HEK293T (cell line): ENCODE measurements at regions of chr6 and their contacts with region 1.

Region 1: DNA sequence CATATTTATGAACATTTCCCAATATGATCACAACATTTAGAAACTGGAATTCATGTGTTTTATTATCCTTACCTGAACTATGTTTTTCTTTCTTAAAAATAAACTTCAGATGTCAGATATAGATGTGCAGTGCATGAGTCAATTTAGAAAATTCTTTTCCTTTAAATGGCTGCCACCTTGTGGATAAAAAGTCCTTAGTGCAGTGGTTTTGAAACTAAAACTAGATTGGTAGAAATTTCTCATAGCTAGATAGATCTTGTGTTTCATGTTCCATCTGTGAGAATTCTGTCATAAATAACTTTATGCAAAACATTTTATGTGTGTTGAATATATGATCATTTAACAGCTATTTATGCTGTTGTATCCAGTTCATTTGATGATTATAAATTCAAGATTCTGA is 134.9 kb downstream of the KLHL32 start:
- DNase-seq: peak; percentile 21

Region 2: DNA sequence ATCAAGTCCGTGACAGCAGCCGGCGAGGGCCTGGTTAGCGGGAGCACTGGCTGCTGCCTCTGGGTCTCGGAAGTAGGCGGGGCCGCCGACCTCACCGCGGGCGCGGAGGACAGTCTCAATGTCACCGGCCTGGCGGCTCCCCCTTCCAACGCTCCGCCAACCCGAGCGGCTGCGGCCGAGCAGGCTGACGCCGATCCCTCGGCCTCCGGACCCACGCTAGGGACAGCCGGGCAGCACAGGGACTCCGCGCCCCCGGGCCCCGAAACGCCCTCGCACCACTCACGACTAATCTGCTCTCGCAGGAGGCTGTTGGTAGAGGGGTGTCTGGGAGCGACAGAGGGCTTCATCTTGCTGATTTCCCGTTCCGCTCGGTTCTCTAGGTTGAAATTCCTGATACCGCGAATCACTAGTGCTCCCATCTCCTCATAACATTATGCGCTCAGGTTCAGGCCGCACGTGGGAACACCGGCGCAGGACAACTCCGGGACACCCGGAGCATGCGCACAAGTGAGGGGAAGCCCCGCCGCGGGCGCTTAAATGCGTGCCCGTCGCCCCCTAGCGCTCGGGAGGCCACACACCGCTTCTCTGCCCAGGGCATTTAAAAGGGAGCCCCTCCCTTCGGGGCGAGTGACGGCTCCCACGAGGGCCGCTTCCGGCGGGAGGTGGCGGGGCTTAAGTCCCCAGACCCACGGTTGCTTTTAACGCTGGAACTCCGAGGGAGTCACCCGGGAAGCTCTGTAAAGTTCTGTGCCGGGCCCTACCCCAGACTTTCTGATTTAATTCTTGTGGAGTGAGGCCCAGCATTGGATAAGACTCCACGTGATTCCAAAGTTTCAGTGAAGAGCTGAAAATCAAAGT is 161.9 kb before region 1 on chr6 and contains the start of gene NDUFAF4:
- CTCF ChIA-PET with region 1: interaction called, 23 read pairs
- POLR2A ChIA-PET with region 1: no interaction called
- DNase-seq: peak; percentile 95